ENCODE measurements at regions of chr1 and their contacts with region 1.

Region 1: DNA sequence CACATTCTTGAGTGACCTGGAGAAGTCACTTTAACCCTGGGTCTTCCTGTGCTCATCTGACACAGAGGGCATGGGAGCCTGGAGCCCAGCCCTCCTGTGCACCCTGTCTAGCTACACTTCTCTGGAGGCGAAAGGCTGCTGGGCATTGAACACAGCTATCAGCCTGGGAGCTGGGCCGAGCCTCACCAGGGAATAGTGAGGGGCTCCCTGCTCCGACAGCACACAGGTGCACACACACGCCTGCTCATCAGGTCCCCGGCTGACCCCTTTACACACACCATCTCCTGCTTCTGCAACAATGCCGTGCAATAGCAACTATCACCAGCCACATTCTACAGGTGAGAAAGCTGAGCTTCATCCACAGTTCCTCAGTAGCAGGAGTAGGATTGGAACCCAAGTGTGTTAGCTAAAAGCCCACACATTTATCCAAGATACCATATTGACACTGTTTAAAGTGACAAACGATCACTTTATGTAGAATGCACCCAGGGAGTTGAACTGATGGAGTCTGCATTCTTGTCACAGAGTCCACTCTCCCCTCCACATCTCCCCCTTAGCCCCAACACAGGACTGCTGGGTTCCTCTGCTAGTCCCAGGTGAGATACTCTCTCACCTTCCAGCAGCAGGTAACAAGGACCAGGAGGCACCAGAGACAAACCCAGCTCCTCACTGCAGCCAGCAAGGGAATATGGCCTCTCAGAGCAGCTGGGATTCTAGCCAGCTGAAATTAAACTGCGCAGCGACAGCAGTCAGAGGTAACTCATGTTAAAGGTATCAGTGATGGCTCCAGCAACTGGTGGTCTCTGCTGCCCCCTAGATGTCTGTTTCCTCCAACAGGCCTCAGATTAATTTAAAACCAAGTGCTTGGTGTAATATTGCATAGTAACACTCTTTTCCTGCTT is 18.3 kb upstream of the CAPN8 start:
- DNase-seq: peak in 1 of 2 experiments; percentile 68
- ATAC-seq: peak; percentile 86 to 92
- H3K4me3 ChIP-seq: no peak overlapping the region
- H3K27ac ChIP-seq: no peak overlapping the region; a peak in 1 of 6 replicates
- H3K4me1 ChIP-seq: no peaks in the 10 kb centered on the region
- CTCF ChIP-seq: peak; percentile 93
- EP300 ChIP-seq: no peak
- POLR2A ChIP-seq: no peak
- RAD21 ChIP-seq: peak; percentile 97 to 99

Region 2: DNA sequence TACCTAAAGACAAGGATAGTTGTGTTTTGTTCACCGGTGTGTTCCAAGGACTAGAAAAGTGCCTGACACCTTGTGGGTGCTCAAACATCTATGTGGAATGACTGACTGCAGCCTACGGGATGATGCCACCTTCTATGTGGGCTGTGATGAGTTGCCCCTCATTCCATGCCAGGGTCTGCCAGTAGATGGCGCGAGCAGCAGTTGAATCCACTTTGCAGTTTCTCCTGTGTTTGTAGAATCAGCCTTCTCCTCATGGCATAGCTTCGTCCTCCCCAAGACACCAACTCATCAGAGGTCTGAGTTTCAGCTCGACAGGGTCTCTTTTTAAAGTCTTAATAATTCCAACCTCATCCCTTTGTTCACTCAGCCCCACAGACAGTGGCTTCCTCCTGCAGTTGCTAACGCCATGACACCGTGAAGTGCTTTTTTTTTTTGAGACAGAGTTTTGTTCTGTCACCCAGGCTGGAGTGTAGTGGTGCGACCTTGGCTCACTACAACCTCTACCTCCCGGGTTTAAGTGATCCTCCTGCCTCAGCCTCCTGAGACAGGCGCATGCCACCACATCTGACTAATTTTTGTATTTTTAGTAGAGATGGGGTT is 152.0 kb before region 1 on chr1:
- CTCF ChIA-PET with region 1: interaction called, 29 read pairs
- POLR2A ChIA-PET with region 1: no interaction called
- DNase-seq: peak; percentile 61 to 66
- ATAC-seq: peak; percentile 86 to 96
- H3K4me3 ChIP-seq: no peak overlapping the region
- H3K27ac ChIP-seq: no peak overlapping the region
- H3K4me1 ChIP-seq: no peaks in the 10 kb centered on the region
- CTCF ChIP-seq: peak; percentile 72
- EP300 ChIP-seq: no peak
- POLR2A ChIP-seq: no peak
- RAD21 ChIP-seq: peak; percentile 74 to 78

Region 3: GRCh38 chr1:223556414-223557129 is 127.3 kb before region 1 on chr1:
- CTCF ChIA-PET with region 1: interaction called, 38 read pairs
- POLR2A ChIA-PET with region 1: no interaction called
- DNase-seq: peak; percentile 46 to 61
- ATAC-seq: peak; percentile 83 to 98
- H3K4me3 ChIP-seq: no peak overlapping the region
- H3K27ac ChIP-seq: no peak overlapping the region; a peak in 1 of 6 replicates
- H3K4me1 ChIP-seq: no peaks in the 10 kb centered on the region
- CTCF ChIP-seq: peak; percentile 68
- EP300 ChIP-seq: no peak
- POLR2A ChIP-seq: no peak
- RAD21 ChIP-seq: peak; percentile 83 to 94

Region 4: DNA sequence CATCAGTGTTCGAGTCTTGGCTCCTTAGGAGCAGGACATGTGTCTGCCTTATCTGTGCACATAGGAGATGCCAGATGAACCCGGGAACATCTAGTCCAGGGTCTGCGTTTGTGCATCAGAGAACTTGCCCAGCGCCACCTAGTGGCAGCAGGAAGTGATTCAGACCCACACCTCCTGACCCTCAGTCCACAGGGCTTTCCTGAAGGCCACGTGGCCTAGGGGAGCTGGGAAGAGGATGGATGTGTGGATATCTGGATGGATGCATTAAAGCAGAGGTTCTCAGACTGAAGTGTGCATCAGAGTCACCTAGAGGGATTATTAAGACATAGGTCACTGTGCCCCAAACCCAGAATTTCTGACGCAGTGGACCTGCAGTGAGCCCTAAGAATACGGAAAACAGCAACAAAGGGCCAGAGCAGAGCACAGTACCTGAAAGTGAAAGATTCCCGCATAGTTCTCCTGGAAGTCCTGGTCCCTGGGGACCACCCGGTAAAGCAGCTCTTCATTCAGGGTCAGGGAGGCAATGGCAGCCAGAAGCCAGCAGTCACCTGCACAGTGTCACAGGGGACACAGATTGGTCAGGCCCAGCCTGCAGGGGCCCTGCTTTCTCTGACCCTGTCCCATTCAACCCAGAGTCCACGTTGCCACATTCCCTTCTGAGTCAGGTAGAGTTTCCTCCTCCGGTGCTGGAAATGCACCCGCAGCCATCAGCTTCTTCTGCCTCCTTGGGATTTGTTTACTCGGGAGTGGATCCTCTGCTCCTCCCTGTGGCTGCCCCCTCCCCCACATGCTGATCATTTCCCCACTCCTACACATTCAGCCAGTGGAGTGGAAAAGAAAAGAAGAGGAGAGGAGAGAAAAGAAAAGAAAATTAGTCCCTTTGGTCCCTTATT is 55.4 kb before region 1 on chr1:
- CTCF ChIA-PET with region 1: interaction called, 37 read pairs
- POLR2A ChIA-PET with region 1: no interaction called
- DNase-seq: peak; percentile 59 to 61
- ATAC-seq: peak; percentile 45 to 93; a peak in 4 of 6 replicates
- H3K4me3 ChIP-seq: no peak overlapping the region
- H3K27ac ChIP-seq: peak overlapping the region in 1 of 2 experiments; percentile 13; a peak in 1 of 6 replicates
- H3K4me1 ChIP-seq: peaks cover 17% of the 10 kb centered on the region
- CTCF ChIP-seq: peak; percentile 34; the same call in 2 of the 3 replicates
- EP300 ChIP-seq: no peak
- POLR2A ChIP-seq: no peak
- RAD21 ChIP-seq: peak in 1 of 2 experiments; percentile 27; a peak in 1 of 5 replicates

Region 5: GRCh38 chr1:223670458-223671168 is 13.2 kb before region 1 on chr1:
- CTCF ChIA-PET with region 1: interaction called, 33 read pairs
- POLR2A ChIA-PET with region 1: no interaction called
- DNase-seq: peak; percentile 51 to 68
- ATAC-seq: peak; percentile 81 to 95
- H3K4me3 ChIP-seq: no peak overlapping the region
- H3K27ac ChIP-seq: no peak overlapping the region
- H3K4me1 ChIP-seq: peaks cover 18% of the 10 kb centered on the region
- CTCF ChIP-seq: peak; percentile 62
- EP300 ChIP-seq: no peak
- POLR2A ChIP-seq: no peak
- RAD21 ChIP-seq: peak; percentile 74 to 83

Region 6: DNA sequence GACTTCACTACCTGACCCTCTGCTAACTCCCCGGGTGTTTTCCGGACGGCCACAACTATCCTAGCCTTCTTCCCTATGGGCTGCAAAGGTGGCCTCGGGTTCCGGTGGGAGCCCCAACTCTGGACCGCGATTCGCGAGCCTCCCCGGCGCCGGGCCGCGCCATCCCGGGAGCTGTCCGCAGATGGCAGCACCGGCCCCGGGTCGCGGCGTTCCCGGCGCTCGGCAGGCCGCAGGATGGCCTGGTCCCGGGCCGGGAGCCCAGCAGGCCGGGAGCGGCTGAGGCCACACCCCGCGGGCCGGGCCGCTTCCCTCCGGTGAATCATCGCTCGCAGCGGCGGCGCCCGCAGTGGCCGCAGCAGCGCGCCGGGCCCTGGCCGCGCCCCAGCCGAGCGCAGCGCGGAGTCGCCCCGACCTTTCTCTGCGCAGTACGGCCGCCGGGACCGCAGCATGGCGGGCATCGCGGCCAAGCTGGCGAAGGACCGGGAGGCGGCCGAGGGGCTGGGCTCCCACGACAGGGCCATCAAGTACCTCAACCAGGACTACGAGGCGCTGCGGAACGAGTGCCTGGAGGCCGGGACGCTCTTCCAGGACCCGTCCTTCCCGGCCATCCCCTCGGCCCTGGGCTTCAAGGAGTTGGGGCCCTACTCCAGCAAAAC is 28.5 kb after region 1 on chr1 and contains the start of gene CAPN2:
- CTCF ChIA-PET with region 1: no interaction called
- POLR2A ChIA-PET with region 1: no interaction called
- DNase-seq: peak; percentile 81 to 84
- ATAC-seq: peak; percentile 71 to 75
- H3K4me3 ChIP-seq: peak within 1 kb of the TSS; percentile 88
- H3K27ac ChIP-seq: peak within 1 kb of the TSS; percentile 99
- H3K4me1 ChIP-seq: peaks cover 80% of the 10 kb centered on the region
- CTCF ChIP-seq: peak; percentile 70
- EP300 ChIP-seq: no peak
- POLR2A ChIP-seq: peak; percentile 71
- RAD21 ChIP-seq: peak; percentile 57 to 88
- polyA plus RNA-seq, gene CAPN2: 199 and 217 TPM in 2 replicates

Measured in A549 (cell line).